Stomach (tissue), 19 donors: ENCODE measurements at regions of chr11 and their contacts with region 1.

Region 1: DNA sequence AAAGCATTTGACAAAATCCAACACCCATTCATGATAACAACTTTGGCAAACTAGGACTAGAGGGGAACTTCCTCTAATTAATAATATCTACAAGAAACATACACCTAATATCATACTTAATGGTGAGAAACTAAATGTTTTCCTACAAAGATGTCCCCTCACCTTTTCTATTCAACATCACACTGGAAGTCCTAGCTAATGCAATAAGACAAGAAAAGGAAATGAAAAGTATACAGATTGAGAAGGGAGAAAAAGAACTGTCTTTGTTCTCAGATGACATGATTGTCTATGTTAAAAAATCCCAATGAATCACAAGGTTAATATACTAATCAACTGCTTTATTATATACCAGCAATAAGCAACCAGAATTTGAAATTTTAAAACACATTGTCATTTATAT is 52.4 kb downstream of the C11orf65 start:
- DNase-seq: no peak
- H3K4me3 ChIP-seq: no peak overlapping the region
- H3K27ac ChIP-seq: no peak overlapping the region
- H3K4me1 ChIP-seq: no peaks in the 10 kb centered on the region
- H3K27me3 ChIP-seq: no peaks in the 10 kb centered on the region
- CTCF ChIP-seq: no peak
- EP300 ChIP-seq: no peak
- POLR2A ChIP-seq: no peak

Region 2: DNA sequence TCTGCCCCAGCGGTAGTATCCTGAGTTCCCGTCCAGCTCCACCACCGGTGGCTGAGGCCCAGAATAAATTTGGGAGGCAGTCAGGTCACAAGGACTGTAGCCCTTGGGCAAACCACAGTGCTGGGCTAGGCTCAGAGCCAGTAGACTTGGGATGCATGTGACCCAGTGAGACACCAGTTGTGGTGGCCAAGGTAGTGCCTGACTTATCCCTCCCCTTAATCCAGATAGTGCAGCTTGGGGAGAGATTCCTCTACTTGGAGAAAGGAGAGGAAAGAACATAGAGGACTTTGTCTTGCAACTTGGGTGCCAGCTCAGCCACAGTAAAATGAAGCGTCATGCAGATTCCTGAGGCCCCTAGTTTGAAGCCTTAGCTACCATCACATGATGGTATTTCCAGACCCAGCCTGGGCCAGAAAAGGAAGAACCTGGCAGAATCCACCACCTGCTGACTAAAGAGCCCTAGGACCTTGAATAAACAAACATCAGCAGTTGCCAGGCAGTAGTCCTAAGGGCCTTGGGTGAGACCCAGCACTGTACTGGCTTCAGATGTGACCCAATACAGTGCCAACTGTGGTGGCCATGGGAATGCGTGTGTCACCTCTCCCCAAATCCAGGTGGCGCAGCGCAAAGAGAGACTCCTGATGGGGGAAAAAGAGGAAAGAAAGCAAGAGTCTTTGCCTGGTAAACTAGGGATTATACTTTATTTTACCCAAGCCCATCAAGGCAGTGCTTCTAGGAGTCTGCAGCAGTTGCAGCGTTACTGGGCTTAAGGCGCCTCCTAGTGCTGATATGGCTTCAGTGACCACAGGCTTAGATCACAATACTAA is 233.0 kb after region 1 on chr11:
- intact Hi-C with region 1: loop called (anchors 10 kb)
- DNase-seq: peak; percentile 67 to 88
- H3K4me3 ChIP-seq: no peak overlapping the region
- H3K27ac ChIP-seq: no peak overlapping the region
- H3K4me1 ChIP-seq: peaks cover 0 to 6% (median 2%) of the 10 kb centered on the region in 4 donors
- H3K27me3 ChIP-seq: no peaks in the 10 kb centered on the region
- CTCF ChIP-seq: peak in 5 of 7 experiments; percentile 57 to 67 (median 62)
- EP300 ChIP-seq: no peak
- POLR2A ChIP-seq: no peak